ENCODE measurements at regions of chr12 and their contacts with region 1.

Region 1: GRCh38 chr12:4987076-4987760 is 56.5 kb upstream of the KCNA5 start:
- DNase-seq: peak; percentile 10
- H3K4me3 ChIP-seq: no peak overlapping the region
- H3K27ac ChIP-seq: no peak overlapping the region
- H3K4me1 ChIP-seq: no peaks in the 10 kb centered on the region
- H3K27me3 ChIP-seq: peaks cover 57% of the 10 kb centered on the region
- CTCF ChIP-seq: no peak

Region 2: GRCh38 chr12:4719821-4720636 is 267.2 kb before region 1 on chr12 and contains the start of gene GALNT8:
- CTCF ChIA-PET with region 1: no interaction called
- POLR2A ChIA-PET with region 1: interaction called, 12 read pairs
- intact Hi-C with region 1: no loop called
- DNase-seq: peak; percentile 38
- H3K4me3 ChIP-seq: no peak within 1 kb of the TSS
- H3K27ac ChIP-seq: no peak within 1 kb of the TSS
- H3K4me1 ChIP-seq: no peaks in the 10 kb centered on the region
- H3K27me3 ChIP-seq: peaks cover 6% of the 10 kb centered on the region
- CTCF ChIP-seq: no peak
- total RNA-seq, gene GALNT8: not detected in 2 replicates

Region 3: GRCh38 chr12:5165296-5165970 is 178.2 kb after region 1 on chr12:
- CTCF ChIA-PET with region 1: no interaction called
- POLR2A ChIA-PET with region 1: no interaction called
- intact Hi-C with region 1: no loop called
- DNase-seq: no peak
- H3K4me3 ChIP-seq: no peak overlapping the region
- H3K27ac ChIP-seq: no peak overlapping the region
- H3K4me1 ChIP-seq: no peaks in the 10 kb centered on the region
- H3K27me3 ChIP-seq: peaks cover 51% of the 10 kb centered on the region
- CTCF ChIP-seq: no peak